Activated CD8-positive, alpha-beta T cell treated with anti-CD3 and anti-CD28 coated beads for 36 hours (primary cell): ENCODE measurements at regions of chr5 and their contacts with region 1.

Region 1: DNA sequence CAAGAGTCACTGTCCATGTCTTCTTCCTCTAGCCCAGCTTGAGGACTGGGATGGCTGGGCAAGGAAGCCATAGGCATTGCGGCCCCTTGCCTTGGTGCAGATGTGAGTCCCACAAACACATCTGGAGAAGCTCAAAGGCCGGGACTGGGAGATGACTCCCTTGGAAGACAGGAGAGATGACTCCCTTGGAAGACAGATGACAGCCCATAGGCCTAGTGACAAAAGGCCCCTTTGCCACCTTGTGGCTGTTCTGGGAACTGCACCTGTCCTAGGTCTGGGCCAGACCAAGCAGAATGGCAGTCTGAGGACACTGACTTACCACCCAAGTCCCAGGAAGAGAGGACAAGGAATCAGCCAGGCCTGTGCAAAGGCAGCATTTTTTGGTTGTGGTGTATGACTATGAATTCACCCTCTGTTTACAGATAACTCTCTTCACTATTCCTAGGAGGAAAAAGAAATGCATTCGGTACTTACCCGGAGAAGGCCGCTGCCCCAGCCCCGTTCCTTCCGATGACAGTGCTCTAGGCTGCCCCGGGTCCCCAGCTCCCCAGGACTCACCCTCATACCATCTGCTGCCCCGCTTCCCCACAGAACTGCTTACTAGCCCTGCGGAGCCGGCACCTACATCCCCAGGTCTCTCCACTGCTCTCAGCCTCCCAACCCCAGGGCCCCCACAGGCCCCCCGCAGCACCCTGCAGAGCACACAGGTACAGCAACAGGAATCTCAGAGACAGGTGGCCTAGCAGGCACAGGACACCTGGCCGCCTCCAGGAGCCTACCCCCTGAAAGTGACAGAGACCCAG is 30.8 kb downstream of the SKP1 start:
- DNase-seq: peak; percentile 91
- ATAC-seq: peak; percentile 88
- H3K4me3 Mint-ChIP-seq: no peak overlapping the region
- H3K27ac Mint-ChIP-seq: peak overlapping the region; percentile 70
- H3K4me1 Mint-ChIP-seq: peaks cover 51% of the 10 kb centered on the region
- H3K27me3 Mint-ChIP-seq: no peaks in the 10 kb centered on the region
- CTCF ChIP-seq: peak; percentile 95

Region 2: DNA sequence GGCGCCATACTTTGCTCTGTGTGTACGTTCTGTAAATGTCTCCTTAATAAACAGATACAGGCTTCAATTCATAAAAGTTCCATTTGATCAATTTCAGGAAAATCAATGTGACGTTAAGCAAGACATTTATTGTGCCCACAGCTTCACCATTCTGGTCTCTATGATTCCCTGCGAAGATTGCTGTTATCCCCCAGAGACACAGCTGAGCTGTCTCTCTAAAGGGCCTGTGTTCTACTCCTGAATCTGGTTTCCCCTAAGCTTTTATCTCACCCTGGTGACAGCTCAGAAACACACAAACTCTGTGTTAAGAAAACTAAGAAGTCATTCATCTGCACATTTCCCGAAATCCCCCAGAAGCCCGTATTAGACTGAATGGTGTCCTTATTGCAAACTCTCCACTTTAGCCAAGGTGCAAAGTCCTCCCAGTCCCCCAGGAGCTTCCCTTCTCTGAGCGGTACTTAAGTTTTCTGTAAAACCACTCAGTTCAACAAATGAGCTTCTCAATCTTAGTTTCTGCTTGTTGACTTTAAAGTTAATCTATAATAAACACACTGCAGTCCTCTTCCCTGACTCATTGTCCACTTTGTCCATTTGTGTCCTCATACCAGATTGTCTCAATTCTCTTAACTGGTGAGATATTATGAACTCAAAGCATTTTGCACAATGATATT is 176.2 kb before region 1 on chr5:
- CTCF ChIA-PET with region 1: no interaction called
- POLR2A ChIA-PET with region 1: no interaction called
- intact Hi-C with region 1: no loop called
- DNase-seq: no peak
- ATAC-seq: no peak
- H3K4me3 Mint-ChIP-seq: peak overlapping the region; percentile 98
- H3K27ac Mint-ChIP-seq: peak overlapping the region; percentile 95
- H3K4me1 Mint-ChIP-seq: peaks cover 40% of the 10 kb centered on the region
- H3K27me3 Mint-ChIP-seq: no peaks in the 10 kb centered on the region
- CTCF ChIP-seq: no peak

Region 3: DNA sequence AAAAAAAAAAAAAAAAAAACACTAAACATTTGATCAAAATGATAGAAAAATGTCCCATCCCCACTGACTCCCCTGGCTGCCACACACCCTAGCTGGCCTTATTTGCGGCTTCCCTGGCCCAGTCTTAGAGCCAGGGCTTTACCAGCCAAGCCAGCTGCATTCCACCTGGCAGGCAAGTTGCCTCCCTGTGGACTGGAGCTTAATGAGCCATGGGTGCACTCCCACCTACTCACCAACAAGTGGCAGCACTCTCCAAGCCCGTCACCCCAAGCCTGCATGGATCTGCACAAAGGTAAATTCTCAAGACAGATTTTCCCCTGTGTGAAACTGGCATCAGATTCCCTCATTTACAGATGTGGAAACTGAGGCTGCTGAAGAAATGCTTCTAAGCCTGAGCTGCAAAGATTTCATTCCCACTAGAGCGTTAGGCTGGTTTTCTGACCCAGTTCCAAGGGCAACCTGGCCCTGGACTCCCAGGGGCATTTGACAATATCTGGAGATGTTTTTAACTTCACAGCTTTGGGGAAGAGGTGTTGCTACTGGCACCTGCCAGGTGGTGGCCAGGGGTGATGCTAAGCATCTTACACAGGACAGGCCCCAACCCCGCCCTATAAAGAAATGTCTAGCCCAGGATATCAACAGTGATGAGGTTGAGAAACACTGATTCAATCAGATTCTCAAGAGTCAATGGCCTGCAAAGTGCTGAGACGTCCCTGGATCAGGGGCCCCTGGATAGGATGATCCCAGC is 119.3 kb before region 1 on chr5:
- CTCF ChIA-PET with region 1: interaction called, 1,049 read pairs
- POLR2A ChIA-PET with region 1: interaction called, 3 read pairs
- intact Hi-C with region 1: no loop called
- DNase-seq: peak; percentile 73
- ATAC-seq: peak; percentile 99
- H3K4me3 Mint-ChIP-seq: no peak overlapping the region
- H3K27ac Mint-ChIP-seq: no peak overlapping the region
- H3K4me1 Mint-ChIP-seq: no peaks in the 10 kb centered on the region
- H3K27me3 Mint-ChIP-seq: no peaks in the 10 kb centered on the region
- CTCF ChIP-seq: peak; percentile 43

Region 4: GRCh38 chr5:134053840-134054338 is 92.1 kb before region 1 on chr5:
- CTCF ChIA-PET with region 1: interaction called, 1,049 read pairs
- POLR2A ChIA-PET with region 1: no interaction called
- intact Hi-C with region 1: no loop called
- DNase-seq: no peak
- ATAC-seq: peak; percentile 74
- H3K4me3 Mint-ChIP-seq: no peak overlapping the region
- H3K27ac Mint-ChIP-seq: peak overlapping the region; percentile 58
- H3K4me1 Mint-ChIP-seq: peaks cover 38% of the 10 kb centered on the region
- H3K27me3 Mint-ChIP-seq: no peaks in the 10 kb centered on the region
- CTCF ChIP-seq: no peak

Region 5: GRCh38 chr5:134161513-134162395 is 15.8 kb after region 1 on chr5:
- CTCF ChIA-PET with region 1: interaction called, 43 read pairs
- POLR2A ChIA-PET with region 1: interaction called, 22 read pairs
- intact Hi-C with region 1: no loop called
- DNase-seq: no peak
- ATAC-seq: peak; percentile 42
- H3K4me3 Mint-ChIP-seq: no peak overlapping the region
- H3K27ac Mint-ChIP-seq: peak overlapping the region; percentile 69
- H3K4me1 Mint-ChIP-seq: peaks cover 39% of the 10 kb centered on the region
- H3K27me3 Mint-ChIP-seq: no peaks in the 10 kb centered on the region
- CTCF ChIP-seq: no peak